CD4-positive, alpha-beta memory T cell (primary cell): ENCODE measurements at regions of chr10 and their contacts with region 1.

Region 1: DNA sequence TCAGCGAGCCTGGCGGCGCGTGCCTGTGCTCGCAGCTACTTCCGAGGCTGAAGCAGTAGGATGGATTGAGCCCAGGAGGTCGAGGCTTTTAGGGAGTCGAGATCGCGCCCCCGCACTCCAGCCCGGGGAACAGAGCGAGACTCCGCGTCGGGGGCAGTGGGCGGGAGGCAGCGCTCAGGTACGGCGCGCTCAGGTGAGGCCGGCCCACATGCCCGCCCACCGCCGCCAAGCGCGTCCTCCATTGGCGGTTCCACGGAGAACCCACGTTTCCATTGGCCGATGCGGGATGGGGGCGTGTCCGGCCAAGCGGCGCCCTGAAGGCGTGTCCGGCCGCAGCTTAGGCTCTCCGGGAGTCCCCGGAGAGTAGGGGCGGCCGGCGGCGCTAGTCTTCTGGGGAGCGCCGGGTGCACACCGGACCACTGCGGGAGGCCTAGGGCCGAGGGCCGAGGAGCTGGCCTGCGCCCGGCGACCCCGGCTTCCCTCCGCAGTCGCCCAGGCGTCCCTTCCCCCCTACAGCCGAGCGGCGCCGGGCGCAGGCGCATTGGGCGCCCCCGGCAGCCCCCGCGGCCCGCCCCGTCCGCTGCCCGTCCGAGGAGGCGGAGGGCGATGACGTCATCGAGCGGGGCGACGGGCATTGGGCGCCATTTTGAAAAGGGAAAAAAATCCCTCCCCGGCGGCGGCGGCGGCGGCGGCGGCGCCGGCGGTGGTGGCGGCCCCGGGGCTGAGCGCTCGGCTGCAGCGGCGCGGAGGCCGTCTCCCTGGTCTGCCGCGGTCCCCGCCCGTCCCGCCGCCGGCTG is at the start of gene PPP2R2D:
- DNase-seq: peak; percentile 96 to 98 (median 97)
- H3K4me3 ChIP-seq: peak within 1 kb of the TSS; percentile 63 to 80
- H3K4me3 Mint-ChIP-seq: peak within 1 kb of the TSS; percentile 87 to 94 (median 89)
- H3K27ac ChIP-seq: peak within 1 kb of the TSS; percentile 75
- H3K27ac Mint-ChIP-seq: peak within 1 kb of the TSS; percentile 90 to 98 (median 95)
- H3K4me1 ChIP-seq: peaks cover 69% of the 10 kb centered on the region
- H3K4me1 Mint-ChIP-seq: peaks cover 35 to 72% (median 51%) of the 10 kb centered on the region in 4 donors
- H3K27me3 ChIP-seq: no peaks in the 10 kb centered on the region
- H3K27me3 Mint-ChIP-seq: peaks cover 0 to 2% of the 10 kb centered on the region in 2 donors
- total RNA-seq, gene PPP2R2D: 47.2 to 49.2 TPM

Region 2: DNA sequence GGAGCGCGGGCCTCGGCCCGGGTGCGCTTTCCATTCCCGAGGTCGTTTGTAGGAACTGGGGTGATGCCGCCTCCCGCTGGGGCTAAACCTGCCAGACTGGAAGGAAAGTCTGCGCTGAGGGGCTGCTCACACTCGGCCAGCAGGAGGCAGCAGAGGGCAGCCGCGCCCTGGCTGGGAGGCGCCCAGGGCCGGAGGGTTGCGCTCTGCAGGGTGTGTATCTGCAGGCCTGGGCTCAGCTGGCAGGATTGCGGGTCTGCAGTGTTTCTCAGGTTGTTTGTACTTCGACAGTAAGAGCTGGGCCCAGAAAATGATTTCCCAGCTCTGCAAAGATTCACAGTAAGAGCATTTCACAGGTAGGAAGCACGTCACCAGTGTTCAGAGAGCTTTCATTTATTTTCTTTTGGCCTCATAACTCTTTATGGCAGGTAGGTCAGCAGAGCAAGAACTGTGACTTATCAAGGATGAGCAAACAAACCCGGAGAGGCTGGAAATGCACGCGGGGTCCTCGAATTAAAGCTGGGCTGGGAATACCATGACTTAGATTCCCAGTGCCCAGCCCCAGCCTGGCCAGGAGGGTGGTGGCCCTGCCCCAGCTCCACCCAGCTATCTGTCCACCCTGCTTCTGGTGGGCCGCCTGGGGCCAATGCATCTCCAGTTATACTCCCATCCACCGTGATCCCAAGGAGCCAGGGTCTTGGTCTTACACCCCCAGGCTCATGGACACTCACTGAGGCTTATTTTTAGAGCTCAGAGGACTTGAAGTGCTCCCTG is 15.0 kb before region 1 on chr10:
- CTCF ChIA-PET with region 1: interaction called, 25 read pairs
- POLR2A ChIA-PET with region 1: no interaction called
- intact Hi-C with region 1: loop called (anchors 2 kb)
- DNase-seq: peak; percentile 68 to 83 (median 78)
- H3K4me3 ChIP-seq: no peak overlapping the region
- H3K4me3 Mint-ChIP-seq: no peak overlapping the region
- H3K27ac ChIP-seq: no peak overlapping the region
- H3K27ac Mint-ChIP-seq: peak overlapping the region in 2 of 7 donors; percentile 33 to 46
- H3K4me1 ChIP-seq: peaks cover 4% of the 10 kb centered on the region
- H3K4me1 Mint-ChIP-seq: peaks cover 0 to 5% (median 3%) of the 10 kb centered on the region in 4 donors
- H3K27me3 ChIP-seq: no peaks in the 10 kb centered on the region
- H3K27me3 Mint-ChIP-seq: peaks cover 6 to 11% of the 10 kb centered on the region in 2 donors

Region 3: DNA sequence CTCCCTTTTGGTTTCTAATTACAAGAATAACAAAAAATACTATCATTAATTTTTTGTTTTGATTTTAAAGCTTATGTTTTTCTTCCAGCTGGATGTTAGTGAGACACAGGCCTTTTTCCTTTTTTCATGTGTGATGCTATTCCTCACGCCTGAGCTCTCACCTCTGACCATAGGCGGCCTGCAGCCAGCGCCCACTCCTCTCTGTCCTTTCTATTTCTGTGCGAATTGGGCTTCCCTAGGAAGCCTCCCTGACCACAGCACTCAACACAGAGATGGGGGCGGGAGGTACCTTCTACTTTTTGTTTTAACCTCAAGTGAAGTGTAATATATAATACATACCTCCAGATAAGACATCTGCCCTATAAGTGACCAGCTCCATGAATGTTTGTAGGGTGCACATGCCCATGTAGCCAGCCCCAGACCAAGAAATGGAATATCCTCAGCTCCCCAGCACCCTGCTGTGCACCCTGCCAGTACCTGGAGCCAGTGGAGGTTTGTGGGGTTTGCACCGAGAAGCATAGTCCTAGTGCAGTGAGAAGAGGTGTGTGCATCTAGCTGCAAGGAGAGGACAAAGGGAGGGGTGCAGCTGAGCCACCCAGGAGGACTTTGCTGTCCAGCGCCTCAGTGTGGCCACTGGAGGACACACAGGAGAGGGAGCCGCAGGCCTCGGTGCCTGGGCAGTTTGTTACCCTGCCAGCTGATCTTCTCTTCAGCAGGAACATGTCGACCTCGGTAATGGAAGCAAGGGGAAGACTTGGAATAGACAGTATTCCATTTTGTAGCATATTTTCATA is 42.7 kb after region 1 on chr10:
- CTCF ChIA-PET with region 1: no interaction called
- POLR2A ChIA-PET with region 1: no interaction called
- intact Hi-C with region 1: loop called (anchors 5 kb)
- DNase-seq: peak in 2 of 5 donors; percentile 5 to 15
- H3K4me3 ChIP-seq: no peak overlapping the region
- H3K4me3 Mint-ChIP-seq: no peak overlapping the region
- H3K27ac ChIP-seq: no peak overlapping the region
- H3K27ac Mint-ChIP-seq: peak overlapping the region in 5 of 7 donors; percentile 8 to 78 (median 52)
- H3K4me1 ChIP-seq: no peaks in the 10 kb centered on the region
- H3K4me1 Mint-ChIP-seq: peaks cover 0 to 3% (median under 1%) of the 10 kb centered on the region in 4 donors
- H3K27me3 ChIP-seq: no peaks in the 10 kb centered on the region
- H3K27me3 Mint-ChIP-seq: no peaks in the 10 kb centered on the region

Region 4: DNA sequence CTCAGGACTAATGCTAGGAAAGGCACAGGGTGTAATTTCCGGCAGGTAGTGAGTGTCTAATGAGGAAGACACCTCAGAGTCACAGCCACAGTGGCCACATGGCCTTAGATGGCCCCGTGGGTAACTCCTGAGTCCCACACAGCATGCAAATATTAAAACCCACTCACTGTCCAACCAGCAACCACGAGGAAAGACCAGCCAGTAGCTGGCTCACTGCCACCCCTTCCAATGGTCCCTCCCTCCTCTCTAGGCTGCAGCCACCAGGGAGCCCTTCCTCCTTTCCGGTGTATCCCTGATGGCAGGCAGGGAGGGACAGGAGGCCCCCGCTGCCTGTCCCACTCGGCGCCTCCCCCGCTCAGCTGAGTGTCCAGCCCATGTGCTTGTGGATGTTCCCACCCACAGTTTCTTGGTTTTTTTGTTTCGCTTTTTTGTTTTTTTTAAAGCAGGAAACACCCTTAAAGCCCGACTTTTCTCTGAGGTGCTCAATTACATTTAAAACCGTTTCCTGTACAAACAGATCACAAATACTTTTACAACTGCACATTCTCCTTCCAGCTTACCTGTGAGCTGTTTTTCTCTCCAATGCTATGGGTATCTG is 72.0 kb after region 1 on chr10:
- CTCF ChIA-PET with region 1: interaction called, 5 read pairs
- POLR2A ChIA-PET with region 1: interaction called, 14 read pairs
- intact Hi-C with region 1: loop called (anchors 2 kb)
- DNase-seq: peak; percentile 58 to 65 (median 63)
- H3K4me3 ChIP-seq: peak overlapping the region; percentile 14 to 56
- H3K4me3 Mint-ChIP-seq: peak overlapping the region; percentile 77 to 93 (median 86)
- H3K27ac ChIP-seq: peak overlapping the region; percentile 49
- H3K27ac Mint-ChIP-seq: peak overlapping the region; percentile 80 to 95 (median 89)
- H3K4me1 ChIP-seq: peaks cover 57% of the 10 kb centered on the region
- H3K4me1 Mint-ChIP-seq: peaks cover 45 to 74% (median 60%) of the 10 kb centered on the region in 4 donors
- H3K27me3 ChIP-seq: no peaks in the 10 kb centered on the region
- H3K27me3 Mint-ChIP-seq: no peaks in the 10 kb centered on the region

Region 5: DNA sequence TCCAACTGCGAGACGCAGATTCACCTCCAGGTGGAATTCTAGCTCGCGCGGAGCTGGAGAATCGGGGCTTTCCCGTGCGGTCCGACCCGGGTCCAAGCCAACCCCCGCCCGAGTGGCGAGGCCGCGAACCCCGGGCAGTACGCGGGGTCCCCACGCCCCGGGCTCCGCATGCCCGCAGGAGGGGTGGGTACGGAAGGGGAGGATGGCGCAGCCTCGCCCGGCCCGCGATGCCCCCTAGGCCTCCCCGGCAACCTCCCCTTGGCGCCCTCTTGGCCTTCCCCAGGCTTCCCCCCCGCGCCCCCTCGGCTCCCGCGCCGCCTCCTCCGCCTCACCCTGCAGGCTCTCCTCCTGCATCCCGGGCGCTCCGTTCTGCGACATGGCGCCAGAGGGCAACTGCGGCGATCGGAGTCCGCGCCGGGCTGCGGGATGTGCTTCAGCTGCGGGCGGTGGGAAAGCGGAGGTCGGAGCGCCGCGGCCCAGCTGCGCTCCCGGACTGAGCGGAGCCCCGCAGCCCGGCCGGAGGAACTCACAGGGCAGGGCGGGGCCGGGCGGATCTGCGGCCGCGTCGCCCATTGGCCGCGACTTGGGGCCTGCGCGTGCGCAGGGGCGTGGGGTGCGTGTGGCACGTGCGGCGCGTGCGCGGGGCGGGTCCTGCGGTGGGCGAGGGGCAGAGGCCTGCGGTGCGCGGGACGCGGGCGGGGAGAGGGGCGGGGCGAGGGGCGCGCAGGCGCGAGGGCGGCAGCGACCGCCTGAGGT is 81.1 kb after region 1 on chr10 and contains the start of gene BNIP3:
- CTCF ChIA-PET with region 1: interaction called, 4 read pairs
- POLR2A ChIA-PET with region 1: interaction called, 19 read pairs
- intact Hi-C with region 1: loop called (anchors 1 kb)
- DNase-seq: peak; percentile 91 to 95 (median 94)
- H3K4me3 ChIP-seq: peak within 1 kb of the TSS; percentile 34 to 66
- H3K4me3 Mint-ChIP-seq: peak within 1 kb of the TSS; percentile 84 to 90 (median 86)
- H3K27ac ChIP-seq: peak within 1 kb of the TSS; percentile 61
- H3K27ac Mint-ChIP-seq: peak within 1 kb of the TSS; percentile 81 to 92 (median 87)
- H3K4me1 ChIP-seq: peaks cover 35% of the 10 kb centered on the region
- H3K4me1 Mint-ChIP-seq: peaks cover 24 to 56% (median 38%) of the 10 kb centered on the region in 4 donors
- H3K27me3 ChIP-seq: no peaks in the 10 kb centered on the region
- H3K27me3 Mint-ChIP-seq: no peaks in the 10 kb centered on the region
- total RNA-seq, gene BNIP3: 29.8 to 31.7 TPM

Region 6: GRCh38 chr10:132452631-132453469 is 552.3 kb after region 1 on chr10:
- CTCF ChIA-PET with region 1: no interaction called
- POLR2A ChIA-PET with region 1: no interaction called
- intact Hi-C with region 1: loop called (anchors 5 kb)
- DNase-seq: peak; percentile 91 to 92 (median 91)
- H3K4me3 ChIP-seq: peak overlapping the region in 1 of 2 donors; percentile 32
- H3K4me3 Mint-ChIP-seq: peak overlapping the region in 6 of 8 donors; percentile 45 to 79 (median 56)
- H3K27ac ChIP-seq: peak overlapping the region; percentile 86
- H3K27ac Mint-ChIP-seq: peak overlapping the region; percentile 83 to 98 (median 95)
- H3K4me1 ChIP-seq: peaks cover 31% of the 10 kb centered on the region
- H3K4me1 Mint-ChIP-seq: peaks cover 6 to 37% (median 15%) of the 10 kb centered on the region in 4 donors
- H3K27me3 ChIP-seq: no peaks in the 10 kb centered on the region
- H3K27me3 Mint-ChIP-seq: no peaks in the 10 kb centered on the region

Region 7: GRCh38 chr10:133261726-133262325 is 1361.3 kb after region 1 on chr10:
- CTCF ChIA-PET with region 1: no interaction called
- POLR2A ChIA-PET with region 1: no interaction called
- intact Hi-C with region 1: loop called (anchors 10 kb)
- DNase-seq: peak; percentile 75 to 83 (median 78)
- H3K4me3 ChIP-seq: peak overlapping the region in 1 of 2 donors; percentile 46
- H3K4me3 Mint-ChIP-seq: peak overlapping the region; percentile 70 to 79 (median 76)
- H3K27ac ChIP-seq: peak overlapping the region; percentile 83
- H3K27ac Mint-ChIP-seq: peak overlapping the region; percentile 90 to 98 (median 92)
- H3K4me1 ChIP-seq: peaks cover 85% of the 10 kb centered on the region
- H3K4me1 Mint-ChIP-seq: peaks cover 29 to 86% (median 66%) of the 10 kb centered on the region in 4 donors
- H3K27me3 ChIP-seq: no peaks in the 10 kb centered on the region
- H3K27me3 Mint-ChIP-seq: peaks cover 0 to 4% of the 10 kb centered on the region in 2 donors